ENCODE measurements at regions of chr11 and their contacts with region 1.

Region 1: DNA sequence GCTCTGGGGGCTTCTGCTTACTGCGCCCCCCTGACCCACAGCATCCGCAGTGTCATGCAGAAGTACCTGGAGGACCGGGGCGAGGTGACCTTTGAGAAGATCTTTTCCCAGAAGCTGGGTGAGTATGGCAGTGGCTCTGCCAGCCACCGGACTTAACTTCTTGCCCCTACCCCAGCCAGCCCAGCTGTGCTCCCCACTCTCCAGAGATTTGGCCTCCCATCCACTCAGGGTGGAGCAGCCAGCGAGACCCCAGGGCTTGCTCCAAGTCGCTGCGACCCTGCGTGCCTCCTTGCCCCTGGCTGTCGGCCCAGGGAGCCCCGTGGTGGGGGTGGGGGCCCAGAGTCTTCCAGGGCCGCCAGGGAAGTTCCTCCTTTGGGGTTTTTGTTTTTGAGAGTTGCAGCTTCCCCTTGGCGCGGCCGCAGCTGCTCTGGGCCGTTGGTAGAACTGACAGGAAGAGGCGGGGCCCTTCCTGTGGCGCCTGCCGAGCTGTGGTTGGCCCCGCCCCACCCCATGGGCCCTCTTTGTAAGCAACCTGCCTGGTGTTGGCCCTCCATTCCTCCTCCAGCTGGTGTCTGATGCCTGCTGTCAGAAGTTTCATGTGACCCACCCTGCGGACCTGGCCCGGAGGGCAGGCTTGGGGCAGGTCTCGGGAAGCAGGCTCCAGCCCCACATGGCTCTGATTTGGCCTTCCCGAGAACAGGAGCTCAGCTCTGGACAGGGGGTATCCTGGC is 11.1 kb downstream of the GRK2 start:
- DNase-seq: peak; percentile 98 to 100 (median 99)
- H3K4me3 ChIP-seq: peak overlapping the region in 6 of 7 experiments; percentile 26 to 69 (median 54)
- H3K27ac ChIP-seq: peak overlapping the region; percentile 96 to 97
- H3K4me1 ChIP-seq: peaks cover 6 to 99% (median 98%) of the 10 kb centered on the region in 4 experiments
- H3K27me3 ChIP-seq: no peaks in the 10 kb centered on the region

Region 2: GRCh38 chr11:67136156-67136555 is 141.2 kb before region 1 on chr11:
- CTCF ChIA-PET with region 1: no interaction called
- POLR2A ChIA-PET with region 1: no interaction called
- DNase-seq: no peak
- H3K4me3 ChIP-seq: no peak overlapping the region
- H3K27ac ChIP-seq: no peak overlapping the region
- H3K4me1 ChIP-seq: no peaks in the 10 kb centered on the region
- H3K27me3 ChIP-seq: no peaks in the 10 kb centered on the region

Region 3: DNA sequence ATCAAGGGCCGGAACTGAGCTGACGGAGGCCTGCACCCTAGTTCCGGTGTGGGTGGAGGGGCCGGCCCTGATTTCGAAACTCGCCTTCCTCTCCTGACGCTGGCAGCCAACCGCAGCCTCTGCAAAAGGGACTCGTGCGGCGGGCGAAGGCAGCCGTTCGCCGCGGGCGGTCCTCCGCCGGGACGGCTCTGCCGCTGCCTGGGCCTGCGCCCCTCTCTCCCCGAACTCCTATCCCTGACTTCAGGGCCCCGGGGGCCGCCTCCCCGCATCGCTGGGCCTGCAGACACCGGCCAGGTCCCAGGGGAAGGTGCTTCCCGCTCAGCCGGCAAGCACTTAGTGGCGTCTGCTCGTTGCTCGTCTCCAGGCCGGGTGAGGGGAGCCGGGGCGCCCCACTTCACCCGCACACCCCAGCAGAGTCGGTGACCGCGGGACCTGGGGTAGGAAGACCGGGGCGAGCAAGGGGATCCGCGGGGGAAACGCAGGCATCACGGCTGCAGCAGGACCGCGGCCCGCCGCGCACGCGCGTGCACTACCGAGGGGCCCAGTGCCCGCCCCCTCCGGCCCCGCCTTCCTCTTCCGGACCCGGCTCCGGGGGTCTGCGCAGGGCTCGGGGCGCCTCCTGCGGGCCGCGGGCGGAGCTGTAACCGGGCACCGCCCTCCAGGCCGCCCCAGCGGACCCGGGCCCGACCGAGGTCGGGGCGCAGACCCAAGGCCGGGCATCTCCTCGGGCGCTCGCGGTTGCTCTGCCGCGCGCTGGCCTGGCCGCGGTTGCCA is 11.2 kb after region 1 on chr11:
- CTCF ChIA-PET with region 1: interaction called, 70 read pairs
- POLR2A ChIA-PET with region 1: interaction called, 211 read pairs
- DNase-seq: peak; percentile 95 to 97 (median 97)
- H3K4me3 ChIP-seq: peak overlapping the region; percentile 48 to 81 (median 64)
- H3K27ac ChIP-seq: peak overlapping the region; percentile 90 to 97
- H3K4me1 ChIP-seq: peaks cover 0 to 78% (median 68%) of the 10 kb centered on the region in 4 experiments
- H3K27me3 ChIP-seq: no peaks in the 10 kb centered on the region

Region 4: DNA sequence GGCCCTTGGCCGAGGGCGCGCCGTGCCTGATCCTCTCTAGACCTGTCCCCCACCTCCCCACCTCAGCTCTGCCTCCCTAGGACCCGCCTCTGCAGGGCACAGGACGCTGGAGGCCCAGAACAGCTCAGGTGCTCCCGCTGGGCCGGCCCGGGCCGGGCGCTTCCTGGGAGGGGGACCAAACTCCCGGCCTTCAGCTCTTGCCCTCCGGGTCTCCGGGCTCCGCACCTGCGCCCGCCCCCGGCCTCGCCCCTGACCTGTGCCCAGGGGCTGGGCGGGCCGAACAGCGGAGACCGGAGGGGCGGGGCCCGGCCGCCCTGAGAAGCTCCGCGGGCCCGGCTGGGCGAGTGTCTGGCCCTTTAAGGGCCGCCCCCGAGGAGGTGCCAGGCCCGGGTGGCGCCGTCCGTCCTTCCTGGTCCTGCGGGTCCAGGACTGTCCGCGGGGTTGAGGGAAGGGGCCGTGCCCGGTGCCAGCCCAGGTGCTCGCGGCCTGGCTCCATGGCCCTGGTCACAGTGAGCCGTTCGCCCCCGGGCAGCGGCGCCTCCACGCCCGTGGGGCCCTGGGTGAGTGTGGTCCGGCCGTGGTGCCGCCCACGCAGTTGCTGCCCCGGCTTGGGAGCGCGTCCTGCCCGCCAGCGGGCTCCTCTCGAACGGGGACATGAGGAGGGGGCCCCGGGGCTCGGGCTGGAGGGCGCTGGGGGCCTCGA is 25.9 kb after region 1 on chr11 and contains the start of gene SSH3:
- CTCF ChIA-PET with region 1: interaction called, 9 read pairs
- POLR2A ChIA-PET with region 1: interaction called, 15 read pairs
- DNase-seq: peak in 2 of 3 donors; percentile 42 to 59
- H3K4me3 ChIP-seq: peak within 1 kb of the TSS; percentile 65 to 88 (median 78)
- H3K27ac ChIP-seq: peak within 1 kb of the TSS in 1 of 2 experiments; percentile 64
- H3K4me1 ChIP-seq: peaks cover 0 to 33% (median 24%) of the 10 kb centered on the region in 4 experiments
- H3K27me3 ChIP-seq: no peaks in the 10 kb centered on the region

Region 5: DNA sequence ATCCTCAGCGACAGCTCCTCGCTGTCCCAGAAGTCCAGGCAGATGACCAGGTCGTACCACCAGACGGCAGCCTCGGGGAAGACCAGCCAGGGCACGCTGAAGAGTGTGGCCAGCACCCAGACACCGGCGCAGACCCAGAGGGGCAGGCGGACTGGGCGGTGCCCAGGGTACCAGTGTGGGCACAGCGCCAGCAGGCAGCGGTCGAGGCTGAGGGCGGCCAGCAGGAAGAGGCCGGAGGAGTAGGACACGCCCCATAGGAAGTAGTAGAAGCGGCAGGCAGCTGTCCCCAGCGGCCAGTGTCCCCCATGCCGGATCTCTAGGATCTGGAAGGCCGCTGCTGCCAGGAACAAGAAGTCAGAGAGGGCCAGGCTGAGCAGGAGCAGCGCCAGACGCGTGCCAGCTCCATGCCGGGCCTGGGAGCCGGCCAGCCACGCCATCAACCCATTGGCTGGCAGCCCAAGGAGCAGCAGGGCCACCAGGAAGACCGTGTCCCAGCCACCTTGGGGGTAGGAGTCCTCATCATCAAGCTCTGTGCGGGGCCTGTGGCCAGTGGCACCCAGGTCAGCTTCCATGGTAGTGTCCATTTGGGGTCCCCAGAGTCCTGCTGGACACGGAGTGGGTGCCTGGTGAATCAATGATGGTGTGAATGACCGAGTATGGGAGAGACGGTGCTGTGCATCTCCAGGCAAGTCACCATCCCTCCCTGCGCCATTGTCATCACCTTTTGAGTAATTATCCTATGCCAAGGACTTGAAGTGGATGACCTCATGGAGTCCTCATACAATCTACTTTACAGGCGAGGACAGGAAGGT is 175.0 kb after region 1 on chr11 and contains the start of gene GPR152:
- CTCF ChIA-PET with region 1: no interaction called
- POLR2A ChIA-PET with region 1: no interaction called
- DNase-seq: no peak
- H3K4me3 ChIP-seq: no peak within 1 kb of the TSS
- H3K27ac ChIP-seq: no peak within 1 kb of the TSS
- H3K4me1 ChIP-seq: peaks cover 0 to 23% (median 18%) of the 10 kb centered on the region in 4 experiments
- H3K27me3 ChIP-seq: no peaks in the 10 kb centered on the region